GM12878 (cell line): ENCODE measurements at regions of chr1 and their contacts with region 1.

Region 1: GRCh38 chr1:168082008-168082876 is 54.5 kb downstream of the GPR161 start:
- DNase-seq: peak; percentile 17
- ATAC-seq: peak; percentile 95
- H3K4me3 ChIP-seq: no peak overlapping the region
- H3K27ac ChIP-seq: no peak overlapping the region
- H3K4me1 ChIP-seq: no peaks in the 10 kb centered on the region
- H3K27me3 ChIP-seq: no peaks in the 10 kb centered on the region
- CTCF ChIP-seq: peak; percentile 92 to 98 (median 95); a peak in 5 of 6 replicates
- EP300 ChIP-seq: no peak
- POLR2A ChIP-seq: no peak
- RAD21 ChIP-seq: peak; percentile 83

Region 2: GRCh38 chr1:167721617-167722151 is 360.6 kb before region 1 on chr1 and contains the start of gene MPZL1:
- CTCF ChIA-PET with region 1: interaction called, 11 read pairs
- POLR2A ChIA-PET with region 1: interaction called, 3 read pairs
- RAD21 ChIA-PET with region 1: interaction called, 5 read pairs
- SMC1A ChIA-PET with region 1: interaction called, 3 read pairs
- in situ Hi-C with region 1: no loop called
- intact Hi-C with region 1: loop called (anchors 5 kb)
- DNase-seq: peak; percentile 77
- ATAC-seq: peak; percentile 92
- H3K4me3 ChIP-seq: peak within 1 kb of the TSS; percentile 89
- H3K27ac ChIP-seq: peak within 1 kb of the TSS; percentile 80
- H3K4me1 ChIP-seq: peaks cover 36% of the 10 kb centered on the region
- H3K27me3 ChIP-seq: no peaks in the 10 kb centered on the region
- CTCF ChIP-seq: no peak
- EP300 ChIP-seq: no peak
- POLR2A ChIP-seq: peak; percentile 82
- RAD21 ChIP-seq: no peak
- polyA plus RNA-seq, gene MPZL1: 9.8 to 12.0 TPM

Region 3: GRCh38 chr1:167893798-167894197 is 188.4 kb before region 1 on chr1:
- CTCF ChIA-PET with region 1: interaction called, 15 read pairs
- POLR2A ChIA-PET with region 1: no interaction called
- RAD21 ChIA-PET with region 1: interaction called, 6 read pairs
- SMC1A ChIA-PET with region 1: interaction called, 6 read pairs
- in situ Hi-C with region 1: no loop called
- intact Hi-C with region 1: no loop called
- DNase-seq: no peak
- ATAC-seq: no peak
- H3K4me3 ChIP-seq: no peak overlapping the region
- H3K27ac ChIP-seq: no peak overlapping the region
- H3K4me1 ChIP-seq: peaks cover 2% of the 10 kb centered on the region; the same call in 1 of the 2 replicates
- H3K27me3 ChIP-seq: no peaks in the 10 kb centered on the region
- CTCF ChIP-seq: no peak
- EP300 ChIP-seq: no peak
- POLR2A ChIP-seq: no peak
- RAD21 ChIP-seq: no peak

Region 4: DNA sequence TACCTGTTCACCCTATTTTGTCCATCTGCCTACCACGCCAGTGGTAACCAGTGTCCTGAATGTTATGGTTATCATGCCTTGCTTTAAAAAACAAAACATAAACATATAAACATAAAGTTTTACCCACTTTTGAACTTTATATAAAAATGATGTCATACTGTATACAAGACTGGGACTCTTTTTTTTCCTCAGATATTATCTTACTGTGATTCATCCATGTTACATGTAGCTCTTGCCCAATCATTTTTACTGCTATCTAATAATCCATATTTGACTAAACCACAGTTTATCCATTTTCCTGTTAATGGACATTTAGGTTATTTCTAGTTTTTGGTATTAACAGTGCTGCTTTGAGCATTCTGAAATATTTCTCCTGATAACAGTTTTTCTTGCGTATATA is 24.3 kb before region 1 on chr1:
- CTCF ChIA-PET with region 1: interaction called, 18 read pairs
- POLR2A ChIA-PET with region 1: no interaction called
- RAD21 ChIA-PET with region 1: no interaction called
- SMC1A ChIA-PET with region 1: interaction called, 3 read pairs
- in situ Hi-C with region 1: no loop called
- intact Hi-C with region 1: no loop called
- DNase-seq: no peak
- ATAC-seq: no peak
- H3K4me3 ChIP-seq: no peak overlapping the region
- H3K27ac ChIP-seq: no peak overlapping the region
- H3K4me1 ChIP-seq: no peaks in the 10 kb centered on the region
- H3K27me3 ChIP-seq: no peaks in the 10 kb centered on the region
- CTCF ChIP-seq: no peak
- EP300 ChIP-seq: no peak
- POLR2A ChIP-seq: no peak
- RAD21 ChIP-seq: no peak

Region 5: DNA sequence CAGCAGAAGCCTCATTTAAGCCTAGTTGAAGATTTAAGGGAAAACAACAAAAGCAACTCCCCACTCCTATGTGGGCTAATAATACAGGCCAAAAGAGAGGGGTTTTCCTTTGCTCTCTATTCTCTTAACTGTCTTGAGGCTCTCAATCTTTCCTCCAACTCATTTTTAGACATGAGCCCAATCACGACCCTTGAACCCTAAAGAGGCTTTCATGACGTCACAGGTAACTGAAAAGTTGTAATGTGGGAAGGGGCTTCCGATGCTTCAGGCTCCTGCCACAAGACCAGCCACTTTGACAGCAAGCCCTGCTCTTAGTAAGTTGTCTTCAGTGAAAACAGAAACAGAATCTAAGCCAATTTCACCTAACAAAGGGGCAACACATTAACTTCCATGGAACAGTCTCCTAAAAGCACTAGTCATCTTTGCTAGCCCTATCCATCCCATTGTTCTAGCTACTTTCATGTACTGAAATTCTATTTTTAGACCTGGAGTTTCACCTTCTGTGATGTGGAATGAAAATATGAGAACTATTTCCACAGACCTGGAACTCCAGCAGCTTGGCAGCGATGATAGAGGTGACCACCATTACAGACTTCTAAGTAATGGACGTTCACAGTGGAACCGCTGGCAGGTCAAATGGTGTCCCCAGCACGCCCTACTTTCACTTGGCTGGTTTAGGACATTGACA is 18.2 kb after region 1 on chr1:
- CTCF ChIA-PET with region 1: interaction called, 30 read pairs
- POLR2A ChIA-PET with region 1: no interaction called
- RAD21 ChIA-PET with region 1: no interaction called
- SMC1A ChIA-PET with region 1: interaction called, 4 read pairs
- in situ Hi-C with region 1: no loop called
- intact Hi-C with region 1: no loop called
- DNase-seq: no peak
- ATAC-seq: no peak
- H3K4me3 ChIP-seq: no peak overlapping the region
- H3K27ac ChIP-seq: no peak overlapping the region
- H3K4me1 ChIP-seq: no peaks in the 10 kb centered on the region
- H3K27me3 ChIP-seq: no peaks in the 10 kb centered on the region; a peak in 1 of 4 replicates
- CTCF ChIP-seq: no peak
- EP300 ChIP-seq: no peak
- POLR2A ChIP-seq: no peak
- RAD21 ChIP-seq: no peak

Region 6: GRCh38 chr1:168321945-168322344 is 239.7 kb after region 1 on chr1:
- CTCF ChIA-PET with region 1: interaction called, 10 read pairs
- POLR2A ChIA-PET with region 1: no interaction called
- RAD21 ChIA-PET with region 1: interaction called, 7 read pairs
- SMC1A ChIA-PET with region 1: interaction called, 6 read pairs
- in situ Hi-C with region 1: no loop called
- intact Hi-C with region 1: loop called (anchors 10 kb)
- DNase-seq: no peak
- ATAC-seq: peak; percentile 84
- H3K4me3 ChIP-seq: no peak overlapping the region
- H3K27ac ChIP-seq: no peak overlapping the region
- H3K4me1 ChIP-seq: no peaks in the 10 kb centered on the region
- H3K27me3 ChIP-seq: no peaks in the 10 kb centered on the region
- CTCF ChIP-seq: peak; percentile 27 to 47 (median 37); a peak in 4 of 6 replicates
- EP300 ChIP-seq: no peak
- POLR2A ChIP-seq: no peak
- RAD21 ChIP-seq: peak; percentile 49